AG04449 (cell line): ENCODE measurements at regions of chr18 and their contacts with region 1.

Region 1: DNA sequence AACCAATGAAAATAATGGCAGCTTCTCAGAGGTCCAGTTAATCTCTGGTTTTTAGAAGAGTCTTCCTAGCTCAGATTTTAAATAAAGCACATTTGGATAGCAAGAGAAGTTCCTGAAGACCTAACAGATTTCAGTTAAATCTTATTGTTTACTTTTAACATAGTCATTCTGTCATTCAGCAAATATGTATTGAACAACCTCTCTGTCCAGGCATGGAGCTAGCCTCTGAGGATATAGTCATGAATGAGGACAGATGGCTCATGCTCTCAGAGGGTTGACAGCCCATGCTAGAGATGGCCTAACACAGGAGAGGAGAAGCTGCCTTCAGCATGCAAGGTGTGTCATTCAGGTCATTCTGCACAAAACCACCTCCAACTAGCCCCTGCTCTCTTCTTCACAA is 6.2 kb downstream of the CCBE1 start:
- DNase-seq: no peak
- H3K4me3 ChIP-seq: no peak overlapping the region
- CTCF ChIP-seq: no peak

Region 2: DNA sequence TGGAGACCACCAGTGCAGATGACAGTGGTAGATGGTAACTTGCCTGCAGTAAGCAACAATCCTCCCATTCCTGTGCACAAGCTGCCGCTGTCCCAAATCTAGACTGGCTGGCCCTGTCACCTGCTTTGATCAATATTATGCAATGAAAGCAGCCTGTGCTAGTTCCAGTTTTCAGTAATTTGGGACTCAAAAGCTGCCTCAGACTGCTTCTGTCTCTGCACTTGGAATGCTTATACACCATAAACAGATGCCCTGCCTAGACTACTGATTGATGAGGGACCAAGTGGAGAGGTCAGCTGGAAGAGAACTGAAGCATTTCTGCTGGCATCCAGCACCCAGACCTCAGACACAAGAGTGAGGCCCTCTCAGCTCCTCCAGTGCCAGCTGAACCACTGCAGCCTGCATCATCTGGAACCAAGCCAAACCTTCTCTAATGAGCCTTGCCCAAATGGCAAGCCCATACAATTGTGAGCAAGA is 18.7 kb before region 1 on chr18:
- CTCF ChIA-PET with region 1: interaction called, 32 read pairs
- POLR2A ChIA-PET with region 1: no interaction called
- DNase-seq: no peak
- H3K4me3 ChIP-seq: no peak overlapping the region
- CTCF ChIP-seq: no peak